ENCODE measurements at regions of chr7 and their contacts with region 1.

Region 1: DNA sequence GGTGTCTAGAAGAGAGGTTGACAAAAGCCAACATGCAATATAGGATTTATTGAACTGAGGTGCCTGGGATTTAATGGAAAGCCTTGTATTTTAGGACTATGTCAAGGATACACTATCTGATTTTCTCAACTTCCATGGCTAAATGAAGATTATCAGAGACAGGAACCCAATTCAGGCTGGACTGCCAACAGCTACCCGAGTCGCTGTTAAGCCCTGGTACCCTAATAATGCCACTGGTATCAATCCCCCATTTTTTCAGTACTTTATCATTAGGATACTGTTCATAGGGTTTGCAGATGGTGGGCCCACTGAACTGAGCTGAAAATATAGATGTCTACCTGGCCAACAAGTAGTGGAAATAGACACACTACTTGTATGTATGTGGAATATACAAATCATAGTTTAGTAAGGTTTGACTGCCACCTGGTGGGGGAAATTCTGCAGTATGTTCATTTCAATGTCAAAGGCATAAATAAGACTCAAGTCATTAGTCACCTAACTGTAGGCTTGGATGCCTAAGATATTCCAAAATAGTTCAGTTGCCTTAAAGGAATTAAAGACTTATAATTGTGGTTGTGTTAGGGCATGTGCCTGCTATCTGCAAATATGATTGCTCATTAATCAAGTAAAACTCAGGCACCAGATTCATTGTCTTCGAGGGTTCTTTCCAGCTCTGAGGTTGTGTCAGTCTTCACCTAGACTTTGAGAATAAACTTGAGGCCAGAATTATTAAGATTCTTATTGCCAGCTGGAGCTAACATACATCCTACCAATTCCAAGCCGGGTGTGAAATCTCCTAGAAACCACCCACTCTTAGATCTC is 34.1 kb upstream of the NOBOX start:
- DNase-seq: peak; percentile 83
- H3K4me3 Mint-ChIP-seq: no peak overlapping the region
- H3K27ac Mint-ChIP-seq: no peak overlapping the region
- H3K4me1 Mint-ChIP-seq: no peaks in the 10 kb centered on the region
- H3K27me3 Mint-ChIP-seq: no peaks in the 10 kb centered on the region

Region 2: DNA sequence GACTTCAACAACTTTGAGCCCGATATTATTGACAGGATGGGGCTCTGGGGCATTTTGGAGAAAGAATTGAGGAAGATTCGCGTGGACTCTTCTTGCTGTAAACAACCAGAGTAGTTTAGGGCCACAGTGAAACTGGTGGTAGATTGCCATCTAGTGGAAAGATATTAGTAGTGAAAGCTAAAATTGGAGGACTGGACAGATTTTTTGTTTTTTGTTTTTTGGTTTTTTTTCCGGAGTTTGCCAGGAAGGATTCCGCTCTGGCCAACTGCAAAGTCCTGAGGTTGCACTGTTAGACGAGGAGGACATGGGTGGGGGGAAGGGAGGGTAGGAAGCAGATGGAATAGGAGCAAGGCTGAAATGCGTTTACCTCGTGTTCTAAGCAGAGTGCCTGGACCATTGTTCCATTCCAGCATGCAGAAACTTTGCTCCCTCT is 45.7 kb before region 1 on chr7:
- CTCF ChIA-PET with region 1: interaction called, 7 read pairs
- intact Hi-C with region 1: loop called (anchors 1 kb)
- DNase-seq: peak; percentile 25
- H3K4me3 Mint-ChIP-seq: peak overlapping the region; percentile 33
- H3K27ac Mint-ChIP-seq: no peak overlapping the region
- H3K4me1 Mint-ChIP-seq: peaks cover 2% of the 10 kb centered on the region
- H3K27me3 Mint-ChIP-seq: no peaks in the 10 kb centered on the region

Region 3: DNA sequence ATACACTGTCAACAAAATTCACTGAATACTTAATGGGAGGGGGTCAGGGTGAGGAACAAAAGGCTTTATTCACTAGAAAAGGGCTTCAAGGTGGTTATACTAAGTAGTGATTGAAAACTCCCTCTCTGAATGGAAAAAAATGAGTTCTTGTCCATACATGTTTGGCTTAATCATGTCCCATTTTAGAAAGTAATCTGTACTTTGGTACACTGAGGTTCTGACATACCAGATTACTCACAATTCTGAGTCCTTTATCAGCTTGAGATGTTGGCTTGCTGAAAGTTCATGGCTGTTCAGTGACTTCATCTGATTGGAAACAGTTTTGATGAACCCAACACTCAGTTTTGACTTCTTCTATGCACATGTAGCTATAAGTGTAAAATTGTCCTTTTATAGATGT is 21.2 kb before region 1 on chr7:
- CTCF ChIA-PET with region 1: no interaction called
- intact Hi-C with region 1: no loop called
- DNase-seq: no peak
- H3K4me3 Mint-ChIP-seq: no peak overlapping the region
- H3K27ac Mint-ChIP-seq: no peak overlapping the region
- H3K4me1 Mint-ChIP-seq: no peaks in the 10 kb centered on the region
- H3K27me3 Mint-ChIP-seq: peaks cover 7% of the 10 kb centered on the region

Region 4: GRCh38 chr7:144565586-144565985 is 128.0 kb after region 1 on chr7:
- CTCF ChIA-PET with region 1: no interaction called
- intact Hi-C with region 1: no loop called
- DNase-seq: no peak
- H3K4me3 Mint-ChIP-seq: no peak overlapping the region
- H3K27ac Mint-ChIP-seq: no peak overlapping the region
- H3K4me1 Mint-ChIP-seq: no peaks in the 10 kb centered on the region
- H3K27me3 Mint-ChIP-seq: no peaks in the 10 kb centered on the region

Measured in activated naive CD4-positive, alpha-beta T cell treated with anti-CD3 and anti-CD28 coated beads for 36 hours (primary cell).